H1 (cell line): ENCODE measurements at regions of chr15 and their contacts with region 1.

Region 1: DNA sequence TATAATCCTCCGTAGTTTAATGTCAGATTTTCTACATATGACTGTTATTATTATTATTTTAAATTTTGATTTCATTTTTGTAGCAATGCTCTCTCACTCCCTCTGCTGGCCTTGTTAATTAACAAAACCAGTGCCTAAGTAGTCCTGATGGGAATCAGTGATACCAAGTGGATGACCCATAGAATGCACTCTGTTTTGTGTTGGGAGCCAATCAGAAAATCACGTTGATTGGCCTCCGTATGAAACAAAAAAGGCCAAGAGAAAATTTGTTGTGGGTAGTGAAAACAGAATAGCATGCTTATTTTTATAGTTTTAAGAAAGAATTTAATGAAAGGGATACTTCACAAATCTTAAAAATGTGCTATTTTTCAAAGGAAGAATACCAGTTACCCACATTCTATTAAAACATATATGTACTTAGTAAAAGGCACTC is 34.4 kb upstream of the MEIS2 start:
- DNase-seq: no peak
- H3K4me3 ChIP-seq: no peak overlapping the region
- H3K27ac ChIP-seq: no peak overlapping the region
- H3K4me1 ChIP-seq: peaks cover 0 to 2% (median 0%) of the 10 kb centered on the region in 4 experiments; a peak in 2 of 7 replicates
- H3K27me3 ChIP-seq: no peaks in the 10 kb centered on the region
- CTCF ChIP-seq: peak in 2 of 3 experiments; percentile 52 to 79; a peak in 3 of 4 replicates
- EP300 ChIP-seq: no peak
- POLR2A ChIP-seq: no peak
- RAD21 ChIP-seq: peak; percentile 43 to 56; a peak in 3 of 4 replicates

Region 2: GRCh38 chr15:37100109-37100965 is 34.4 kb before region 1 on chr15 and contains the start of gene MEIS2:
- CTCF ChIA-PET with region 1: interaction called, 11 read pairs
- POLR2A ChIA-PET with region 1: no interaction called
- DNase-seq: peak in 1 of 2 experiments; percentile 82
- H3K4me3 ChIP-seq: peak within 1 kb of the TSS; percentile 33 to 81 (median 73)
- H3K27ac ChIP-seq: no peak within 1 kb of the TSS
- H3K4me1 ChIP-seq: peaks cover 4 to 31% (median 17%) of the 10 kb centered on the region in 4 experiments
- H3K27me3 ChIP-seq: peaks cover 36 to 79% (median 69%) of the 10 kb centered on the region in 4 experiments
- CTCF ChIP-seq: no peak
- EP300 ChIP-seq: no peak
- POLR2A ChIP-seq: no peak
- RAD21 ChIP-seq: peak in 1 of 2 experiments; percentile 14; a peak in 1 of 4 replicates
- total RNA-seq, gene MEIS2: 0.22 and 0.65 TPM in 2 replicates

Region 3: DNA sequence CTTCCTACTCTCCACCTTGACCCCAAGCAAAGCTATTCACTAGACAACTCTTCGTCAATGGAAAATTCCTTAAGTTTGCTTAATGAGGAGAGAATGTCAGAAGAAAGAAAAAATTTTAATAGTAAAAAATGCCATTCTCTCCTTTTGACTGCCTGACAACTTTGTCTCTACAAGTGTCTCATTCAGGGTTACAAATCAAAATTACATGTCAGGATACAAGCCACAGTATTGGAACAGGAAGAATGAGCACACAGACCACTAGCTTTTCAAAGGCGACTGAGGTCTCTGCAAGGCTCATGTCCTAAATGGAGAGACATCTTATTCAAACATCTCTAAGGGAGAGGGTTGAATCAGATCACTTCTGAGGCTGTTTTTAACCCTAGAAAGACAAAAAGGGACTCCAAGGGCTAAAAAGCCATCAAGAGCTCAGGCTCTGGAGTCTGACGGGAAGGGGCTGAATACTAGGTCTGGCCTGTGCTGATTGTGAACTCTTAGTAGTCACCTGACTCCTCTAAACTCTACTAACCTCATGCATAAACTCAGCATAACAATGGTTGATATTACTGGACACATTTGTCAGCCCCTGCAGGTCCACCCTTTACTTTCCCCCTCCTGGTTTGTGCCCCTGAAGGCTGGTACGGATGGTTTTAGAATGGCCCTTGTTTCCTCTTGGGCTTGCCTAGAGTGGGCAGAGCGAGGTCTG is 21.6 kb before region 1 on chr15:
- CTCF ChIA-PET with region 1: interaction called, 14 read pairs
- POLR2A ChIA-PET with region 1: no interaction called
- DNase-seq: no peak
- H3K4me3 ChIP-seq: no peak overlapping the region; a peak in 1 of 8 replicates
- H3K27ac ChIP-seq: no peak overlapping the region
- H3K4me1 ChIP-seq: peaks cover 4 to 15% (median 8%) of the 10 kb centered on the region in 4 experiments
- H3K27me3 ChIP-seq: peaks cover 32 to 57% (median 48%) of the 10 kb centered on the region in 4 experiments
- CTCF ChIP-seq: no peak
- EP300 ChIP-seq: no peak
- POLR2A ChIP-seq: no peak
- RAD21 ChIP-seq: no peak

Region 4: GRCh38 chr15:37122703-37123102 is 12.0 kb before region 1 on chr15:
- CTCF ChIA-PET with region 1: interaction called, 18 read pairs
- POLR2A ChIA-PET with region 1: no interaction called
- DNase-seq: no peak
- H3K4me3 ChIP-seq: no peak overlapping the region
- H3K27ac ChIP-seq: no peak overlapping the region
- H3K4me1 ChIP-seq: peaks cover 0 to 3% (median 0%) of the 10 kb centered on the region in 4 experiments; a peak in 3 of 7 replicates
- H3K27me3 ChIP-seq: no peaks in the 10 kb centered on the region
- CTCF ChIP-seq: no peak
- EP300 ChIP-seq: no peak
- POLR2A ChIP-seq: no peak
- RAD21 ChIP-seq: no peak

Region 5: DNA sequence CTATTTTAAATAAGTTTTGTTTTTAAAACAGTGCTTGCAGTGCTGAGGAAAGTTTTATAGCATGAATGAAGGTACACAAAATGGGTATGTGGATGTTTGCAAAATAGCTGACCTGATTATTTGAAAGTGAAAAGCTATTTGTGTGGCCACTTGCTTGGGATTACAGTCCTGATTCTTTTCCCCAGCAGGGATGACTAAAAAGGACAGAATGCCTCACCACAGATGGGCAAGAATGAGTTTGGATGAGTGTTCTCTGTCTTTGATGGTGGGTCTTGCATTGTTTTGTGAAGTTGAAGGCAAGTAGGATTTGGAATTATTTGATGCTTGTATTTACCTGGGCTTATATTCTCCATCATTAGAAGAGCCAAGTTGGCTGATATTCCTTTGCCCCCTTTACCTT is 14.4 kb after region 1 on chr15:
- CTCF ChIA-PET with region 1: interaction called, 16 read pairs
- POLR2A ChIA-PET with region 1: no interaction called
- DNase-seq: no peak
- H3K4me3 ChIP-seq: no peak overlapping the region
- H3K27ac ChIP-seq: no peak overlapping the region
- H3K4me1 ChIP-seq: peaks cover 3 to 7% (median 5%) of the 10 kb centered on the region in 4 experiments; a peak in 5 of 7 replicates
- H3K27me3 ChIP-seq: no peaks in the 10 kb centered on the region
- CTCF ChIP-seq: no peak
- EP300 ChIP-seq: no peak
- POLR2A ChIP-seq: no peak
- RAD21 ChIP-seq: no peak